ENCODE measurements at regions of chr4 and their contacts with region 1.

Region 1: DNA sequence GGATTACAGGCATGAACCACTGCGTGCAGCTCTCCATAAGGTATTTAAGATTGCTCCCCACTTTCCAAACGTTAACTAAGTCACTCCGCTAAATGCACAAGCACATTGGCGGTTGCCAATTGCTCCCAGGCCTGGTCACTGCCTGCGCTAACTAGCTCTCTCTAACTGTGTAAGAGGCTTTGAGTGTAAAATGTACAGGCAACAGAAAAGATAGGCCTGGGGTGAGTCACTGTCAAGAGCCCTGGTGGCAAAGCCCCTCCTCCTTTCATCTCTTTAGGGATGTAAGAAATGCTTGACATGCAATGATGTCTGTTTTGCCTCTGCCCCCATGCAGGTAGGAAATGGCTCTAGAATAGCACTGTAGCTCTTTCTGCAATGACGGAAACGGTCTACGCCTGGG is 329.7 kb upstream of the GATB start:
- DNase-seq: peak; percentile 57
- ATAC-seq: peak; percentile 88
- H3K4me3 Mint-ChIP-seq: no peak overlapping the region
- H3K27ac Mint-ChIP-seq: peak overlapping the region; percentile 85
- H3K4me1 Mint-ChIP-seq: peaks cover 39% of the 10 kb centered on the region
- H3K27me3 Mint-ChIP-seq: no peaks in the 10 kb centered on the region
- CTCF ChIP-seq: no peak

Region 2: GRCh38 chr4:152100379-152101201 is 10.0 kb after region 1 on chr4:
- CTCF ChIA-PET with region 1: interaction called, 8 read pairs
- POLR2A ChIA-PET with region 1: interaction called, 11 read pairs
- intact Hi-C with region 1: no loop called
- DNase-seq: peak; percentile 88
- ATAC-seq: peak; percentile 90
- H3K4me3 Mint-ChIP-seq: peak overlapping the region; percentile 77
- H3K27ac Mint-ChIP-seq: peak overlapping the region; percentile 96
- H3K4me1 Mint-ChIP-seq: peaks cover 82% of the 10 kb centered on the region
- H3K27me3 Mint-ChIP-seq: no peaks in the 10 kb centered on the region
- CTCF ChIP-seq: no peak